Activated CD4-positive, alpha-beta T cell treated with anti-CD3 and anti-CD28 coated beads, Interleukin-2, amount 10 ng/mL, durations not matched to agents 7 days and 5 days (primary cell): ENCODE measurements at regions of chr11 and their contacts with region 1.

Region 1: DNA sequence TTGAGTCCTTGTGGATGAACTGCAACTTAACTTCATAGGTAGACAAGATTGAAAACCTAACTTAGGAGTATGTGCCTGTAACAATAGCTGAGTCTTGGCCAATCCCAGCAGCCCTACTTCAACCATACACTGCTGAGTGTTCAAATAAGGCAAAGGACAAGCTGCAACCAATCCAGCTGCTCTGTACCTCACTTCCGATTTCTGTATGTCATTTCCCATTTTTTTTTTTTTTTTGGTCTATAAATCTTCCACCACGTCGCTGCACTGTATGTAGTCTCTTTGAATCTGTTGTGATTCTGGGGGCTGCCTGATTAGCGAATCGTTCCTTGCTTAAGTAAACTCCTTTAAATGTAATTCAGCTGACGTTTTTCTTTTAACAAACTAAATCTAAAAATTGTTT is 35.4 kb upstream of the FLI1 start:
- DNase-seq: no peak
- H3K4me3 Mint-ChIP-seq: no peak overlapping the region
- H3K27ac Mint-ChIP-seq: no peak overlapping the region
- H3K4me1 Mint-ChIP-seq: peaks cover 2% of the 10 kb centered on the region
- H3K27me3 Mint-ChIP-seq: peaks cover 18% of the 10 kb centered on the region

Region 2: DNA sequence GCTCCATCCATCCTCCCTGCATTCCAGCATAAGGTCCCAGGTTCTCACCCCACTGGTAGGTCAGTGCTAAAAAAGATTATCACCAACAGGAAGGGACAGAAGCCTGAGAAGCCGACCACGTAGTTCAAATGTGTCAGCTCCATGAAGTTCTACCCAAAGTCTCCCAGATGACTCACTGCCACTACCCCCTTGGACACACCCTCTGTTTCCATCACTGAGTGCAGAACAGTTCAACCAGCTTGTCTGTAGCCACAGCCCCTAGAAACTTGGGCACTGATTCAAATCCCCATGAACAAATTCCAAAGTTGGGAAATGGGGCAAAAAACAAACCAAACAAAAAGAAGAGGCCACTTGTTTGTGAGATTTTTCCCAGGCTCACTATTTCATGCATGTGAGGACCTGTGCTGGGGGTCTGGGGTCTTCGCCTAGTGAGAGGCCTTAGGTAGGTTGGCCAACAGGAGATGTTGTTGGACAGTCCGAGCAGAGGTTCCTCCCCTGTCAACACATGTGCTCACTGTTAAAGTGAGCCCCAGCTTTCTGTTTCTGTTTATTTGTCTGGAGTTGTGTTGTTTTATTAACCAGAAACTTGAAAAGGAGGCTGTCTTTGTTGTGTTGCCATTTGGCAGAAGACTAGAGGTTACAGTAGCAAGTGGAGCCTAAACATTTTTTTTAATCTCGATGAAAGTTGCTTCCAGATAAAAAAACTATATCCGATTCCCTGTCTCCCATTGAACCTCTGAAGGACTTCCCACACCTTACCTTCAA is 11.2 kb after region 1 on chr11:
- CTCF ChIA-PET with region 1: interaction called, 18 read pairs
- POLR2A ChIA-PET with region 1: no interaction called
- DNase-seq: no peak
- H3K4me3 Mint-ChIP-seq: no peak overlapping the region
- H3K27ac Mint-ChIP-seq: no peak overlapping the region
- H3K4me1 Mint-ChIP-seq: peaks cover 4% of the 10 kb centered on the region
- H3K27me3 Mint-ChIP-seq: peaks cover 15% of the 10 kb centered on the region

Region 3: DNA sequence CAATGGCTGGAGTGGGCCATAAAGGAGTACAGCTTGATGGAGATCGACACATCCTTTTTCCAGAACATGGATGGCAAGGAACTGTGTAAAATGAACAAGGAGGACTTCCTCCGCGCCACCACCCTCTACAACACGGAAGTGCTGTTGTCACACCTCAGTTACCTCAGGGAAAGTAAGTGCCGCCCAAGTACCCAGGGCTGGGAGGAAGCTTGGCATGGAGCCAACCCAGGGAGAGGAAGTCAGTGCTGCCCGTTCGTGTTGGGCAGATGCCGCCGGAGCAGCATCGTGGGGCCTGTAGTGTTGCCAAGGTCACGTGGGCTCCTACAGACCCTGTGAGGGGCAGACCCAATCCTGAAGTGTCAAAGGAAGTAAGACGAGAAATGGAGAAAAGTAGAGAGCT is 114.3 kb after region 1 on chr11:
- CTCF ChIA-PET with region 1: no interaction called
- POLR2A ChIA-PET with region 1: no interaction called
- DNase-seq: peak; percentile 31
- H3K4me3 Mint-ChIP-seq: no peak overlapping the region
- H3K27ac Mint-ChIP-seq: peak overlapping the region; percentile 73
- H3K4me1 Mint-ChIP-seq: peaks cover 49% of the 10 kb centered on the region
- H3K27me3 Mint-ChIP-seq: no peaks in the 10 kb centered on the region

Region 4: DNA sequence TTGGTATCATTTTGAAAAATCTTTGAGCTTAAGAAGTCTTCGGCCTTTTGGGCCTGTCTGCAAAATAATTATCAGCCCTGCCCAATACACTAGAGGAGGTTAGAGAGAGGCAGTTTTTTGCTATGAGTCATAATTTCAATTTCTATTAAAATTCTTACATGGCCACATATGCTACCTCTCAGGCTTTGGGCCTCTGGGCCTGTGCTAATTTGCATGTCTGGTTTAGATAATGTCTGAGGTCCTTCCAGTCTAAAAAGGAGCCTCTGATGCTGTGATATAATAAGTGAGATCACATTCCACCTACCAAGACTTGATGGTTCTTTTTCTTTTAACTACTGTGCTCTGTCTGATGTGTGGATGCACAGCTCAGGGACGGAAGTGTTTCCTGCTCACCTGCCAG is 137.8 kb after region 1 on chr11:
- CTCF ChIA-PET with region 1: no interaction called
- POLR2A ChIA-PET with region 1: no interaction called
- DNase-seq: no peak
- H3K4me3 Mint-ChIP-seq: no peak overlapping the region
- H3K27ac Mint-ChIP-seq: no peak overlapping the region
- H3K4me1 Mint-ChIP-seq: peaks cover 9% of the 10 kb centered on the region
- H3K27me3 Mint-ChIP-seq: no peaks in the 10 kb centered on the region

Region 5: GRCh38 chr11:128868841-128869580 is 210.5 kb after region 1 on chr11:
- CTCF ChIA-PET with region 1: no interaction called
- POLR2A ChIA-PET with region 1: no interaction called
- DNase-seq: peak; percentile 45
- H3K4me3 Mint-ChIP-seq: no peak overlapping the region
- H3K27ac Mint-ChIP-seq: no peak overlapping the region
- H3K4me1 Mint-ChIP-seq: no peaks in the 10 kb centered on the region
- H3K27me3 Mint-ChIP-seq: peaks cover 4% of the 10 kb centered on the region